PC-3 (cell line): ENCODE measurements at regions of chr3 and their contacts with region 1.

Region 1: DNA sequence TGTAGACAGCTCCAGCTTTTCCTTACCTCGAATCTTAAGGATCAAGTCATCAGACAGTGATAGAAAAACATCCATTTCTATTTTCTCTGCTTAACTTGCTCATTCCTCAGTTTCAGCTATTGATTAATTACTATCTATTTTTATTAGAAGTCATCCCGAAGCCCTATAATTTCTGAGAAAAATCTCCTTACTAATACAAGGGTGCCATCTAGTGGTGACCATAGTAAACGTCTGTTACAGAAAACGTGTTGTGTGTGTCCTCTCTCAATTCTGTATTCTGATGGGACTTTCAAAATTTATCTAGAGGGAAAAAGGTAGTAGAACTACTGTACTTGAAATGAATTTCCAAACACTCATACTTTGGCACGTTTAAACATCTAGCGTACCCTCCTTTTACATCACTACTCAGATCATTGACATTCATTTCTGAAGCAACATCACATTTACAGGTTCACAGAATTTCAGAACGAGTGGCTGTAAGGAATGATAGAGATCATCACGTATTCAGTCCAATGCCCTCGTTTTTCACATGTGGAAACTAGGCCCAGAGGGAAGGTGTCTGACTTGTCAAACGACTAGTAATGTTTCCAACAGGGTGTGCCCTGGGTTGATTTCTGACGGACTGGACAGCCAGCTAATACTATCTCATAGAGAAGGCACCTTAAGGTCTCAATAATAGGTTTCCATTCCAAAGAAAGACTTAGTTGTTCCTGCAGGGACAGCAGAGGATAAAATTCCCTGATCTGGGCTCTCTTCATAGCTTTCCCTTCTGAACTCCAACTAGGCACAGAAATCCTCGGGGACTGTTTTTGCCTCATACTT is 25.6 kb downstream of the HACD2 start:
- DNase-seq: peak; percentile 74
- ATAC-seq: peak; percentile 48
- H3K4me3 ChIP-seq: no peak overlapping the region
- H3K27ac ChIP-seq: no peak overlapping the region
- H3K4me1 ChIP-seq: no peaks in the 10 kb centered on the region
- H3K27me3 ChIP-seq: no peaks in the 10 kb centered on the region
- CTCF ChIP-seq: peak; percentile 93

Region 2: DNA sequence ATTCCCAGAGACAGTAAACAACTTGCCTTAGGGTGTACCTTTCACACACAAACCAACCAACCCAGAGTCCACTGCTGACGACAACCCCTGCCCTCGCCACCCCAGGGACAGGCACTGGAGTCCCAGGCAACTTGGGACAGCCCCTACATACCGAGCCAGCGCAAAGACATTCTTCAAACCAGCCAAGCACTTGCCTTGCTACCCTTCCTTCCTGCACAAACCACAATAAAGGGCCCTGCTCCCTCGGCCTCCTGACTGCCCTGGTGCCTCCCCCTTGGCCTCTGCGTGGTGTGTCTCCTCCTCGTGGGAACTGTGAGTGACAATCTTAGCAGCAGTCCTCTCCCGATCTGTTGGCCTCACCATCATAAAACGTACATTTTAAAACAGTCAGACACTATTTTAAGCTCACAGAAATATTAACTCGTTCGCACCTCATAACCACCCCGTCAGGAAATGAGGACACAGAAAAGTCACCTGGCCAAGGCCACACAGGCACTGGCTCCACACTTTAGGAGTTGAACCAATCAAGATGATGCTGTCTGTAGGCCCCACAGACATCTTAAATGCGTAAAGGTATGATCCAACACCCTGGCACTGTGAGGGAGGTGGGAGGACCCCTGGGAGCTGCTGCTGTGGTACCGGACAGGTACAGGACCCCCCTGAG is 224.1 kb before region 1 on chr3:
- CTCF ChIA-PET with region 1: no interaction called
- POLR2A ChIA-PET with region 1: no interaction called
- intact Hi-C with region 1: no loop called
- DNase-seq: no peak
- ATAC-seq: no peak
- H3K4me3 ChIP-seq: no peak overlapping the region
- H3K27ac ChIP-seq: no peak overlapping the region
- H3K4me1 ChIP-seq: no peaks in the 10 kb centered on the region
- H3K27me3 ChIP-seq: no peaks in the 10 kb centered on the region
- CTCF ChIP-seq: no peak

Region 3: DNA sequence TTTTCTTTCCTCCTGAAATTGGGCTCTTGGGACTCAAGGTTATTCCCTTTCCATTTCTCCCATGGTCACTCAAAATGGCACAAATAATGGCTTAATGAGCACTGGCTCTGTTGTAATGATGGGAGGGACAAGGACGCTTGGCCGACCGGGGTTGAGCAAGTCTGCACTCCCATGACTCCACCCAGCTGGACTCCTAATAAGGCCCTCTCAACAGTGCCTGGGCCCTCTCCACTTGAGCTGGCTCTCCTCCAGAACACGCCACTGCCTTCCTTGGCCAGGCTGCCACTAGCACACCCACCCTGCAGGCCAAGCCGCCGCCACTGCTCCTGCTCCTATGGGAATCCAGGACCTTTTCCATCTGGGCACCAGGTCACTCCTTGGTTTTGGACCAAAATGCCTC is 152.7 kb before region 1 on chr3:
- CTCF ChIA-PET with region 1: no interaction called
- POLR2A ChIA-PET with region 1: no interaction called
- intact Hi-C with region 1: no loop called
- DNase-seq: no peak
- ATAC-seq: no peak
- H3K4me3 ChIP-seq: no peak overlapping the region
- H3K27ac ChIP-seq: no peak overlapping the region
- H3K4me1 ChIP-seq: no peaks in the 10 kb centered on the region
- H3K27me3 ChIP-seq: peaks cover 29% of the 10 kb centered on the region
- CTCF ChIP-seq: no peak

Region 4: GRCh38 chr3:123489400-123490004 is 69.7 kb before region 1 on chr3:
- CTCF ChIA-PET with region 1: no interaction called
- POLR2A ChIA-PET with region 1: no interaction called
- intact Hi-C with region 1: loop called (anchors 5 kb)
- DNase-seq: peak; percentile 84
- ATAC-seq: peak; percentile 87
- H3K4me3 ChIP-seq: no peak overlapping the region
- H3K27ac ChIP-seq: no peak overlapping the region
- H3K4me1 ChIP-seq: no peaks in the 10 kb centered on the region
- H3K27me3 ChIP-seq: no peaks in the 10 kb centered on the region
- CTCF ChIP-seq: peak; percentile 98

Region 5: DNA sequence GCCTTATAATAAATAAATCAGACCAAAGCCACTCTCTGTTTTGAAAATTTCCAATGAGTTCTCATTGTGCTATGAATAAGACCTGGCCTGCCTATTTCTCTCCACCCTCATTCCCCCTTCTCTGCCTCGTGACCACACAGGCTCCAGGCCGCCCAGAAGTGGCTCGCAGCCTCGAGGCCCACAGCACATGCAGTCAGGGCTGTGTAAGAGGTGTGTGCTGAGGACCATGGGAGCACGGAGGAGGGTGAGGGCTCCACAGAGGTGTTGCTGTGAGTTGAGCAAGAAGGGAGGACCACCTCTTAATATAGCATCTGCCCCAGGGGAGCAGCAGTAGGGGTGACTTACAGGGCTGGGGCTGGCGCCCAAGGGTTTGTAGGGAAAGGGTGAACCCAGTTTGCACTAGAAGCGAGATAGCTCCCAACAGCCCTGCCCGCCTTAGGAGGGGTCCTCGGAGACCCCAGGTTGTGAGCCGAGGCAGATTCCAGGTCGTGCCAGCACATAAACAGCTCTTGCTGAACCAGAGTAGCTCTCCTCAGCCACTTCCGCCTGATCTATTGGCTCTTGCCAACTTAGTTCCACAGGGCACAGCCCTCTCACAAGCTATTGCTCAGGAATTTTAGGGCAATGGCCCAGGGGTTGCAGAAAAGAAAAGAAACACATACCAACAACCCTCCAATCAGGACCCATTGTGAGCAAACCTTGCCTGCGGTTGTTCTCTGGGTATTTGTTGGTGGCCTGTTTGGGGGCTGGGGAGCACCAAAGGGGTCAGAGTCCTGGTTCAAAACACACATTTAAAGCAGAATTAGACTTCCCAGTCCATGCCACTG is 207.2 kb after region 1 on chr3:
- CTCF ChIA-PET with region 1: no interaction called
- POLR2A ChIA-PET with region 1: no interaction called
- intact Hi-C with region 1: no loop called
- DNase-seq: no peak
- ATAC-seq: no peak
- H3K4me3 ChIP-seq: no peak overlapping the region
- H3K27ac ChIP-seq: no peak overlapping the region
- H3K4me1 ChIP-seq: 0 out of 2 replicates have a peak, but pooled peaks cover 4% of the 10 kb centered on the region
- H3K27me3 ChIP-seq: no peaks in the 10 kb centered on the region
- CTCF ChIP-seq: no peak